ENCODE measurements at regions of chr17 and their contacts with region 1.

Region 1: GRCh38 chr17:61026818-61027217 is 349.2 kb downstream of the BCAS3 start:
- DNase-seq: no peak
- ATAC-seq: no peak
- H3K4me3 ChIP-seq: no peak overlapping the region
- H3K27ac ChIP-seq: no peak overlapping the region
- H3K4me1 ChIP-seq: no peaks in the 10 kb centered on the region
- H3K27me3 ChIP-seq: no peaks in the 10 kb centered on the region
- CTCF ChIP-seq: no peak
- EP300 ChIP-seq: no peak
- POLR2A ChIP-seq: no peak
- RAD21 ChIP-seq: no peak

Region 2: DNA sequence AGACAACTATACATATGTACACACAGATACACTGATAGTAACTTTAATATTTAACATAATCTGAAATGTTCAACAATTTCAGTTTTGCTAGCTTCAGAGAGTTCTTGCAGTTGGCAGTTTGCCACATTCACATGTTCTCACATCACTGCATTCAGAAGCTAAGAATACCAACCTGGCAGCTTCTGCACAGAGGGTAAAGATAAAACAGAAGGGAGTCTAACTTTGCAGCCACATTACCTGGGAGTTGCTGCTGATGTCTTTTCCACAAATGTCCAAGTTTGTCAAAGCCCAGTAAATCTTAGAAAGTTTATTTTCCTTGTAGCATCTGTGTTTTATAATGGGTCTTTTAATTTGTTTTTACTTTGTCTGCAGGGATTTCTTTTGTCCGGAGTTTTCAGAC is 17.2 kb before region 1 on chr17:
- CTCF ChIA-PET with region 1: no interaction called
- POLR2A ChIA-PET with region 1: no interaction called
- RAD21 ChIA-PET with region 1: interaction called, 17 read pairs
- SMC1A ChIA-PET with region 1: interaction called, 6 read pairs
- in situ Hi-C with region 1: no loop called
- intact Hi-C with region 1: no loop called
- DNase-seq: peak; percentile 43
- ATAC-seq: peak; percentile 81
- H3K4me3 ChIP-seq: no peak overlapping the region
- H3K27ac ChIP-seq: no peak overlapping the region
- H3K4me1 ChIP-seq: peaks cover 4% of the 10 kb centered on the region; the same call in 1 of the 2 replicates
- H3K27me3 ChIP-seq: no peaks in the 10 kb centered on the region
- CTCF ChIP-seq: no peak
- EP300 ChIP-seq: no peak
- POLR2A ChIP-seq: no peak
- RAD21 ChIP-seq: no peak

Region 3: DNA sequence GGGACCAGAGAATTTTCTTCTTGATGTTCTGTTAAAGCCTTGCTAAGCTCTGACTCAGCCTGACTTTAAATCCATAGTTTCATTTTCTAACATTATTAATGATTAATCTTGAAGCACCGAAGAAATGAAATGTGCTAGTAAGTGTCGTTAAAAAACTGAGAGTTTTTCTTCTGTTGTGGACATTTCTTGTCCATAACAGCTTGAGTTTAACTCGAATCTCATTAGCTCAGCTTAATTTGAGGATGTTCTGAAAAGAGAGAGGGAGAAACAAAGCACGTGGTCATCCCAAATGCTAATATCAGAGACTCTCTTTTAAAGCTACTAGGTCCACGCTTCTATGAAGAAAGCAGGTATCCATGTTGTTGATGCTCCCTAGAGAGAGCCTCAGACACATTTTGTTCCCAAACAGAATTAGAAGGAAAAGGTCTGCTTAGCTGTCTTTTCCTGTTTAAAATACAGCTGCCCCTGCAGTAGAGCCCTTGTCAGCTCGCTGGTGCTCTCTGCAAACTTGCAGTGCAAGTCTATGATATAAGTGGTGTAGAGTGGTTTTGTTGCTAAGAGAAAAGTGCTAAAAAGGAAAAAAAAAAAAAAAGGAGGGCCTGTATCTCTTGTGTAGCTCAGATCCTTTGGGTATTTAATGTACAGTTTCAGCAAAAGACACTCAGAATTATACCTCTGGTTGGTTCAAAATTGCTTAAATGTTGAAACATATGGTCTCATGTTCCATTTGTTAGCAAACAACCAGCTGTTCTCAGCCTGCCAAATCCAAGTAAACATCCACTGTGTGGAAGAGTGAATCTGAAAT is 181.7 kb after region 1 on chr17:
- CTCF ChIA-PET with region 1: no interaction called
- POLR2A ChIA-PET with region 1: no interaction called
- RAD21 ChIA-PET with region 1: no interaction called
- SMC1A ChIA-PET with region 1: no interaction called
- in situ Hi-C with region 1: no loop called
- intact Hi-C with region 1: no loop called
- DNase-seq: no peak
- ATAC-seq: no peak
- H3K4me3 ChIP-seq: no peak overlapping the region
- H3K27ac ChIP-seq: no peak overlapping the region
- H3K4me1 ChIP-seq: no peaks in the 10 kb centered on the region
- H3K27me3 ChIP-seq: no peaks in the 10 kb centered on the region
- CTCF ChIP-seq: no peak
- EP300 ChIP-seq: no peak
- POLR2A ChIP-seq: no peak
- RAD21 ChIP-seq: no peak